Calu3 (cell line): ENCODE measurements at regions of chr2 and their contacts with region 1.

Region 1: GRCh38 chr2:27303093-27304025 is 4.9 kb downstream of the UCN start:
- DNase-seq: peak; percentile 59
- H3K4me3 Mint-ChIP-seq: peak overlapping the region; percentile 40
- H3K27ac Mint-ChIP-seq: no peak overlapping the region
- H3K4me1 Mint-ChIP-seq: no peaks in the 10 kb centered on the region
- H3K27me3 Mint-ChIP-seq: peaks cover 31% of the 10 kb centered on the region
- CTCF ChIP-seq: peak; percentile 80

Region 2: GRCh38 chr2:27249891-27250651 is 53.3 kb before region 1 on chr2:
- CTCF ChIA-PET with region 1: interaction called, 11 read pairs
- intact Hi-C with region 1: no loop called
- DNase-seq: peak; percentile 68
- H3K4me3 Mint-ChIP-seq: no peak overlapping the region
- H3K27ac Mint-ChIP-seq: no peak overlapping the region
- H3K4me1 Mint-ChIP-seq: no peaks in the 10 kb centered on the region
- H3K27me3 Mint-ChIP-seq: peaks cover 62% of the 10 kb centered on the region
- CTCF ChIP-seq: peak; percentile 84

Region 3: DNA sequence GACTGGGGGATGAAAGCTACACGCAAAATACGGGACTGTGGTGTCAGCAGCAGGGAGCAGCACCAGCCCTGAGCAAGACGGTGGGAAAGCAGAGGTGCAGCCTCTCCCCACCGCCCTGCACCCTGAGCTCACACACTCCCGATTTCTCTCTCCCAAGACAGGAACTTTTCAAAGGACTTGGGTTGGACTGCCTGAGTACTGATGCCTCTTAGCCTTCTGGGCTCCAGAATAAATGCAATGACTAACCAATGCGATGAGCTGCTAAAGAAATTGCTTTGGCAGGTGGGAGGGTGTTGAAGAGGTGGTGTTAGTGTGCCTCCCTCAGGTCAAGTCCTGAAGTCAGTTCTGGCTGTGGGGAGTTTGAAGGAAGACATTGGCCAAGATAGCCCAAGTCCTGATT is 11.5 kb before region 1 on chr2:
- CTCF ChIA-PET with region 1: interaction called, 32 read pairs
- intact Hi-C with region 1: no loop called
- DNase-seq: no peak
- H3K4me3 Mint-ChIP-seq: no peak overlapping the region
- H3K27ac Mint-ChIP-seq: no peak overlapping the region
- H3K4me1 Mint-ChIP-seq: peaks cover 23% of the 10 kb centered on the region
- H3K27me3 Mint-ChIP-seq: peaks cover 27% of the 10 kb centered on the region
- CTCF ChIP-seq: no peak